ENCODE measurements at regions of chr11 and their contacts with region 1.

Region 1: GRCh38 chr11:103035791-103036434 is 56.0 kb downstream of the DCUN1D5 start:
- DNase-seq: peak in 1 of 2 donors; percentile 78
- ATAC-seq: peak; percentile 87 to 94 (median 94)
- H3K4me3 ChIP-seq: no peak overlapping the region
- H3K4me3 Mint-ChIP-seq: peak overlapping the region; percentile 14
- H3K27ac ChIP-seq: no peak overlapping the region
- H3K27ac Mint-ChIP-seq: peak overlapping the region; percentile 70 to 76
- H3K4me1 ChIP-seq: no peaks in the 10 kb centered on the region
- H3K4me1 Mint-ChIP-seq: peaks cover 6 to 9% of the 10 kb centered on the region in 2 donors
- H3K27me3 ChIP-seq: no peaks in the 10 kb centered on the region
- H3K27me3 Mint-ChIP-seq: no peaks in the 10 kb centered on the region
- CTCF ChIP-seq: peak; percentile 68

Region 2: DNA sequence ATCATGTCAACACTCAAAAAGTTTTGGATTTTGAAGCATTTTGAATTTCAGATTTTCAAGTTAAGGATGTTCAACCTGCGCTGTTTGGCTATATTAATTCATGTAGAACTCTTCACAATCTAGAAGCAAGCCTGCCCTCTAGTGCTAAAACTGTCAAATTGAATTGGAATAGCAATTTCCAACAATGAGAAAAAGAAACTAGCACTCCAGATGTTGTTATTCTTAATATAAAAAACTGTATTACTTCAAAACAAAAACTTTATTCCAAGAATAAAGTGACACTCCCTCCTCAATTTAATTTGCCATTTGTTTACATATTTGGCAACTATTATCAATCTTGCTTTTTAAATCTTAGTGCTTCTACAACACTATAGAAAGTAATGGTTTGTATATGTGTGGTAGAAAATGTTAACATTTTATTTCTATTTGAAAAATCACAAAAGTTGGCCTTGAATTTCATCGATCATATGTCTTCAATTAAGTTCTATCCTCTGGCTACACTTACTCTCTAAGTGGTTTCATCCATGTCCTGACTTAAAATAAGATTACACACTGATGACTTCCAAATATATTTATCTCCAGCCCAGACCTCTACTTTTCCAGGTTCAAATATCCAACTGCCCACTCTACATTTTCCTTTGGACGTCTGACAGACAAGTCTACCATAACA is 19.4 kb after region 1 on chr11:
- intact Hi-C with region 1: loop called (anchors 1 kb)
- DNase-seq: peak in 1 of 2 donors; percentile 51
- ATAC-seq: peak in 2 of 3 donors; percentile 72 to 78
- H3K4me3 ChIP-seq: no peak overlapping the region
- H3K4me3 Mint-ChIP-seq: no peak overlapping the region
- H3K27ac ChIP-seq: no peak overlapping the region
- H3K27ac Mint-ChIP-seq: no peak overlapping the region
- H3K4me1 ChIP-seq: no peaks in the 10 kb centered on the region
- H3K4me1 Mint-ChIP-seq: no peaks in the 10 kb centered on the region
- H3K27me3 ChIP-seq: no peaks in the 10 kb centered on the region
- H3K27me3 Mint-ChIP-seq: no peaks in the 10 kb centered on the region
- CTCF ChIP-seq: peak; percentile 72

Region 3: GRCh38 chr11:103108933-103109817 is 73.3 kb after region 1 on chr11 and contains the start of gene DYNC2H1:
- intact Hi-C with region 1: loop called (anchors 5 kb)
- DNase-seq: peak; percentile 84 to 95
- ATAC-seq: peak; percentile 95 to 98 (median 97)
- H3K4me3 ChIP-seq: peak within 1 kb of the TSS; percentile 56
- H3K4me3 Mint-ChIP-seq: peak within 1 kb of the TSS; percentile 95
- H3K27ac ChIP-seq: peak within 1 kb of the TSS; percentile 58
- H3K27ac Mint-ChIP-seq: peak within 1 kb of the TSS; percentile 85 to 99
- H3K4me1 ChIP-seq: peaks cover 11% of the 10 kb centered on the region
- H3K4me1 Mint-ChIP-seq: peaks cover 13 to 17% of the 10 kb centered on the region in 2 donors
- H3K27me3 ChIP-seq: peaks cover 10% of the 10 kb centered on the region
- H3K27me3 Mint-ChIP-seq: peaks cover 6 to 19% of the 10 kb centered on the region in 2 donors
- CTCF ChIP-seq: peak; percentile 47
- total RNA-seq, gene DYNC2H1: 4.1 to 7.5 (median 4.4) TPM

Region 4: GRCh38 chr11:103601225-103601846 is 565.4 kb after region 1 on chr11:
- intact Hi-C with region 1: loop called (anchors 10 kb)
- DNase-seq: peak in 1 of 2 donors; percentile 39
- ATAC-seq: peak; percentile 63 to 70 (median 70)
- H3K4me3 ChIP-seq: no peak overlapping the region
- H3K4me3 Mint-ChIP-seq: no peak overlapping the region
- H3K27ac ChIP-seq: no peak overlapping the region
- H3K27ac Mint-ChIP-seq: no peak overlapping the region
- H3K4me1 ChIP-seq: no peaks in the 10 kb centered on the region
- H3K4me1 Mint-ChIP-seq: no peaks in the 10 kb centered on the region
- H3K27me3 ChIP-seq: no peaks in the 10 kb centered on the region
- H3K27me3 Mint-ChIP-seq: peaks cover 4 to 15% of the 10 kb centered on the region in 2 donors
- CTCF ChIP-seq: peak; percentile 53